T-cell (primary cell): ENCODE measurements at regions of chr1 and their contacts with region 1.

Region 1: GRCh38 chr1:22039594-22040285 is 12.8 kb upstream of the CDC42 start:
- DNase-seq: peak; percentile 71 to 97 (median 92)
- ATAC-seq: peak; percentile 96 to 99 (median 98)
- H3K4me3 ChIP-seq: peak overlapping the region; percentile 35 to 44
- H3K4me3 Mint-ChIP-seq: peak overlapping the region; percentile 39 to 80 (median 73)
- H3K27ac ChIP-seq: peak overlapping the region; percentile 97
- H3K27ac Mint-ChIP-seq: peak overlapping the region; percentile 96 to 99
- H3K4me1 ChIP-seq: peaks cover 48 to 73% of the 10 kb centered on the region in 2 experiments
- H3K4me1 Mint-ChIP-seq: peaks cover 57 to 64% (median 63%) of the 10 kb centered on the region in 3 donors
- H3K27me3 ChIP-seq: no peaks in the 10 kb centered on the region
- H3K27me3 Mint-ChIP-seq: no peaks in the 10 kb centered on the region

Region 2: DNA sequence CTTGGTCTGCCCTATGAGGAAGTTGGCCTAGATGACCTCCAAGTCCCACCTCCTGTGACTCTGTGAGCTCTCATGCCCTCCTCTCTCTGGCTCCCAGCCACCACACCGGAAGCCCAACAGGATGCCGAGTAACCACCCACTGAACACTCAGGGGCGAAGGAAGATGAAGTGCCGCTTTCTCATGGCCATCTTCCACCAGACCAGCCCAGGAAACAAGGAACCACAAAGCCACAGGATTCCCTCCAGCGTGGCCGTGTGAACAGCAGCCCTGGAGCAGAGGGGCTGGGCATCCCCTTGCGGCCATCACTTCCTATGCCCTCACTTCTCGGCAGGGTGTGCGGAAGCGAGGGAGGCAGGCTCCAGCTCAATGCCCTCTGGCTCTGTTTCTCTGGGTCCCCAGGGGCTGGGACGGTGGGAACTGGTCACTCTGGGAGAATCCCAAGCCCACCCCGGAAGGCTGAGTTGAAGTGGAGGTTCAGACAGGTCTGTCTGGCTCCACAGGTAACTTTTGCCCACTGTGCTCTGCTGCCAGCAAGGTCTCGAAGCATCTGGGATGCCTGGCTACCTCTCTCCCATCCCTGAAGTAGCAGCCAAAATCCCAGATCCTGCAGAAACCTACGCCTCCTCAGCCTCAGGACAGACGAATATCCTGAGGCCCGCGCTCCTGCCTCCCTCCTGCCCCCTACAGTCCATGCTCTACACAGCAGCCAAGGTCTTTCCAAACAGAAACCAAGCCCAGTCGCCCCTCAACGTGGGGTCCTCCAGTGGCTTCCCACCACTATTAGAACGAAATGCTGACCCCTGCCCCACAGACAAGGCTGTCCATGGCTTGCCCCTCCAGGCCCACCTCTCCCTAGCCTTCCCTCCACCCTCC is 705.3 kb before region 1 on chr1:
- CTCF ChIA-PET with region 1: no interaction called
- POLR2A ChIA-PET with region 1: interaction called in 1 of 2 experiments, 13 read pairs
- DNase-seq: peak; percentile 61 to 89 (median 81)
- ATAC-seq: peak; percentile 86 to 94 (median 91)
- H3K4me3 ChIP-seq: peak overlapping the region; percentile 43 to 63
- H3K4me3 Mint-ChIP-seq: peak overlapping the region; percentile 80 to 91 (median 81)
- H3K27ac ChIP-seq: peak overlapping the region; percentile 94
- H3K27ac Mint-ChIP-seq: peak overlapping the region; percentile 98 to 99
- H3K4me1 ChIP-seq: peaks cover 63 to 89% of the 10 kb centered on the region in 2 experiments
- H3K4me1 Mint-ChIP-seq: peaks cover 87 to 90% (median 88%) of the 10 kb centered on the region in 3 donors
- H3K27me3 ChIP-seq: no peaks in the 10 kb centered on the region
- H3K27me3 Mint-ChIP-seq: no peaks in the 10 kb centered on the region

Region 3: DNA sequence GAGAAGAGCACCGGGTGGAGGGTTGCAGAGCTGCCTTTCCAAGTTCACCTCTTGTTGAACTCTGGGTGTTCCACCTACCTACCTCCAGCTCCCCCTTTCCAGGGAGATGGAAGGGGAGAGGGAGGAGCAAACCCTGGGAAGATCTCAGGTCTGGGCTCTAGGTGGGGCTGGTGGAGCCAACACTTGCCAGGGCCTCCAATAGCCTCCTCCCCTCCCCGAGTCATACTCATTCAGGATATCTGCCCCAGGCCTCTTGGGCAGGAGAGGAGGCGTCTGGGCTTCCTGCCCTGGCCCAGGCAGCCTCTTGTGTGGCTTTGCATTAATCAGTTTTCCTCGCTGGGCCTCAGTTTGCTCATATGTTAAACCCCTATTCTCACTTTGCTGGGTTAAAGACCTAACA is 384.0 kb before region 1 on chr1:
- CTCF ChIA-PET with region 1: no interaction called
- POLR2A ChIA-PET with region 1: no interaction called
- DNase-seq: no peak
- ATAC-seq: no peak
- H3K4me3 ChIP-seq: no peak overlapping the region
- H3K4me3 Mint-ChIP-seq: no peak overlapping the region
- H3K27ac ChIP-seq: no peak overlapping the region
- H3K27ac Mint-ChIP-seq: no peak overlapping the region
- H3K4me1 ChIP-seq: peaks cover 9 to 21% of the 10 kb centered on the region in 2 experiments
- H3K4me1 Mint-ChIP-seq: peaks cover 19 to 23% (median 20%) of the 10 kb centered on the region in 3 donors
- H3K27me3 ChIP-seq: peaks cover 2 to 28% of the 10 kb centered on the region in 2 experiments
- H3K27me3 Mint-ChIP-seq: peaks cover 3 to 6% of the 10 kb centered on the region in 2 donors

Region 4: GRCh38 chr1:21701401-21701800 is 338.3 kb before region 1 on chr1:
- CTCF ChIA-PET with region 1: no interaction called
- POLR2A ChIA-PET with region 1: interaction called in 1 of 2 experiments, 10 read pairs
- DNase-seq: no peak
- ATAC-seq: no peak
- H3K4me3 ChIP-seq: no peak overlapping the region
- H3K4me3 Mint-ChIP-seq: no peak overlapping the region
- H3K27ac ChIP-seq: no peak overlapping the region
- H3K27ac Mint-ChIP-seq: no peak overlapping the region
- H3K4me1 ChIP-seq: no peaks in the 10 kb centered on the region
- H3K4me1 Mint-ChIP-seq: peaks cover 3 to 5% (median 4%) of the 10 kb centered on the region in 3 donors
- H3K27me3 ChIP-seq: no peaks in the 10 kb centered on the region
- H3K27me3 Mint-ChIP-seq: no peaks in the 10 kb centered on the region

Region 5: DNA sequence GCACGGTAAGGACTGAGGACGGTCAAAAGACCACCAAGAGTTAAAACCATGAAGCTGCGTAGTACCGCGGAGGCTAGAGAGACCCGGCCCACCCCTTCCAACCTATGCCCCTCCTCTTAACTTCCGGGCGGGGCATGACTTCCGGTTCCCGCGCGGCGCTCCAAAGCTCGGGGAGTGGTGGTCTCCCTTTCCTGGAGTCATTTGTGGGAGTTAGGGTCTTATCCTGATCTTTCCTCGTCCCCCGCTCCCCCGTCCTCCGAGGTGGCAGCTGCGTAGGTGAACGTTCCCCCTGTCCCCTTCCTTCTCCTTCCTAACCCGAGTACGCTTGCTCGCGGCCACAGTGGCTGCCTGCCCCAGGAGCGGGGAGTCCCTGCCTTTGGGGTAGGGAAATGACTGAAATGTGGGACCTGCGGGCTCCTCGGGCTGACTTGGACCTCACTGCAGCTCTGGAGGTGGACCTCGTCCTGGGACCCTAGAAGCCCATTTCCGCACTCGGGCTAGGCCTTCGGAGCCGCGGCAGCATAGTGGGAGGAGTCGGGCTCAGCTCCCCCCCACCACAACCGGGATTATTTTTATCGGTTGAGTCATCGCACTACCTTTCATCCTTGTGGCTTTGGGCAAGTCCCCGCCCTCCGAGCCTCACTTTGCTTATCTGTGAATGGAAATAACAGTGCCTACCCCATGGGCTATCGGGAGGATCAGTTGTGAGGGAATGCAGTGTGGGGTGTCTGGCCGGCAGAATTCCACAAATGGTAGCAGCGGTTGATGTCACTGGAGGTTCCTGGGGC is 14.2 kb before region 1 on chr1:
- CTCF ChIA-PET with region 1: interaction called in 1 of 2 experiments, 46 read pairs
- POLR2A ChIA-PET with region 1: interaction called, 8 to 57 read pairs
- DNase-seq: peak; percentile 77 to 92 (median 86)
- ATAC-seq: peak; percentile 76 to 84 (median 81)
- H3K4me3 ChIP-seq: peak overlapping the region; percentile 94 to 98
- H3K4me3 Mint-ChIP-seq: peak overlapping the region; percentile 90 to 95 (median 95)
- H3K27ac ChIP-seq: peak overlapping the region; percentile 99
- H3K27ac Mint-ChIP-seq: peak overlapping the region; percentile 95 to 96
- H3K4me1 ChIP-seq: peaks cover 19 to 47% of the 10 kb centered on the region in 2 experiments
- H3K4me1 Mint-ChIP-seq: peaks cover 51 to 68% (median 63%) of the 10 kb centered on the region in 3 donors
- H3K27me3 ChIP-seq: no peaks in the 10 kb centered on the region
- H3K27me3 Mint-ChIP-seq: no peaks in the 10 kb centered on the region

Region 6: GRCh38 chr1:22052115-22053016 is 12.6 kb after region 1 on chr1 and contains the start of gene CDC42:
- CTCF ChIA-PET with region 1: interaction called, 6 to 26 read pairs
- POLR2A ChIA-PET with region 1: interaction called, 18 to 50 read pairs
- DNase-seq: peak; percentile 92 to 99 (median 97)
- ATAC-seq: peak; percentile 92 to 96 (median 93)
- H3K4me3 ChIP-seq: peak within 1 kb of the TSS; percentile 63 to 72
- H3K4me3 Mint-ChIP-seq: peak within 1 kb of the TSS; percentile 94 to 99 (median 97)
- H3K27ac ChIP-seq: peak within 1 kb of the TSS; percentile 91
- H3K27ac Mint-ChIP-seq: peak within 1 kb of the TSS; percentile 95 to 98
- H3K4me1 ChIP-seq: peaks cover 30 to 51% of the 10 kb centered on the region in 2 experiments
- H3K4me1 Mint-ChIP-seq: peaks cover 65 to 69% (median 67%) of the 10 kb centered on the region in 3 donors
- H3K27me3 ChIP-seq: no peaks in the 10 kb centered on the region
- H3K27me3 Mint-ChIP-seq: no peaks in the 10 kb centered on the region
- total RNA-seq, gene CDC42: 181 to 348 (median 192) TPM